ENCODE measurements at regions of chr17 and their contacts with region 1.

Region 1: GRCh38 chr17:73311781-73312641 is at the start of gene CDC42EP4:
- DNase-seq: peak; percentile 93

Region 2: DNA sequence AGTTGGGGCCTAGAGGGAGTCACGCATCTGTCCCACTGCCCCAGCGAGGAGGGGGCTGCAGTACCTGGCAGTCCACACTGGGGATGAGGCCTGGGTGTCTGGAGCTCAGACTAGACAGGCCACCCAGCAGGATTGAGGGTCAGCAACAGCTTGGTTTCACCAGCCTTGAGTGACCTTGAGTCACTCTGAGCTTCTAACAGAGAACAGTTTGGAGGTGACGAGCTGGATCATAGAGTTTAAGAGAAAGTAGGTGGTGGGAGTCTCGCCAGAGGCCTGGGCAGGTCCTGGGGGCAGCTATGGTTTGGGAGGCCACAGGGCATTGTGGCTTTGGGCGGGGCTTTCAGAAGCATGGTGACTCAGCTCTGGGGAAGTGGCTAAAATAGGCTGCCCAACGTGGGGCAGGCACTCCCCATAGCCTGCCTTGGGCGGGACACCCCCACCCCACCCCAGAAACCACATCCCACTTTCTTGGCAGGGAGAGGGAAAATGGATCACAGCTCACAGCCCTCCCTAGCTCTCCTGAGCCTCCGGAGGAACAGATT is 20.7 kb before region 1 on chr17:
- CTCF ChIA-PET with region 1: interaction called, 5 read pairs
- POLR2A ChIA-PET with region 1: interaction called, 16 read pairs
- DNase-seq: no peak

Region 3: GRCh38 chr17:73297934-73298861 is 13.8 kb before region 1 on chr17:
- CTCF ChIA-PET with region 1: interaction called, 7 read pairs
- POLR2A ChIA-PET with region 1: interaction called, 17 read pairs
- DNase-seq: no peak

Region 4: GRCh38 chr17:73325527-73325842 is 13.5 kb after region 1 on chr17:
- CTCF ChIA-PET with region 1: interaction called, 3 read pairs
- POLR2A ChIA-PET with region 1: interaction called, 10 read pairs
- DNase-seq: no peak

Region 5: DNA sequence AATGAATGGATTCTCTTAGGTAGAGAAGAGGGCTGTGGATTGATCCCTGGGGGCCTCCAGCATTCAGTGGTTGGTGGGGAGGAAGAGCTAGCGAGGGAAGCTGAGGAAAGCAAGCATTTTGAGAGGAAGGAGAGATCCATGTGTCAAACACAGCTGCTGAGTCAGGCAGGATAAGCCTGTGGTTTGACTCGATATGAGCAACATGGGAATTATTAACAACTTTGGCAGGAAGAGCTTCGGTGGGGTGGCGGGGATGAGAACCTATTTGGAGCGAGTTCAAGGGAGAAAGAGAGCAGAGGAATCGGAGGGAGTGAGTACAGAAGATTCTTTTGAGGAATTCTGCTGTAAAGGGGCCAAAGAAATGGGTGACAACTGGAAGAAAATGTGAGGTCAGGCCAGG is 59.3 kb after region 1 on chr17:
- CTCF ChIA-PET with region 1: interaction called, 10 read pairs
- POLR2A ChIA-PET with region 1: interaction called, 4 read pairs
- DNase-seq: no peak

Measured in HEK293T (cell line).